ENCODE measurements at regions of chr17 and their contacts with region 1.

Region 1: GRCh38 chr17:39244600-39245570 is 19.1 kb upstream of the STAC2 start:
- H3K4me3 Mint-ChIP-seq: no peak overlapping the region
- H3K27ac Mint-ChIP-seq: no peak overlapping the region
- H3K4me1 Mint-ChIP-seq: peaks cover 13% of the 10 kb centered on the region
- H3K27me3 Mint-ChIP-seq: peaks cover 20% of the 10 kb centered on the region

Region 2: DNA sequence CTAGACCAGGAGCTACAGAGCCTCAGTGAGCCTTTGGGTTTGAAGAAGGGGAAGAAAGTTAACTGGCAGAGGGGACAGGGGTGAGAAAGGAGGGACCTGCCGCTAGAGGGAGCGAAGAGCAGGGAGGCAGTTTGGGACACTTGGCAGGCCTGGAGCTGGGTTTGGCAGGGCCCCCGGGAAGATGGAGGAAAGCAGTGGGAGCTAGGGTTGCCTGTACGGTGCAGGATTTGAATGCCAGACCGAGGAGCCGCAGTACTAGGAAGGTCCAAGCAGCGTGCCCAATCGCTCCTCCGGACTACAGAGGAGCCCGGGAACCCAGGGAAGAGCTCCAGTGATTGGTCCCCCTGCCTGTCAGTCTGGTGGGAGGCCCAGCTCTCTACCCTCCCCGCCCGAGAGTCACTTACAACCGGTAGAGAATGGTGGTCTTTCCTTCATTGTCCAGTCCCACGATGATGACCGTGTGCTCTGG is 80.2 kb before region 1 on chr17:
- intact Hi-C with region 1: loop called (anchors 5 kb)
- H3K4me3 Mint-ChIP-seq: peak overlapping the region; percentile 80
- H3K27ac Mint-ChIP-seq: peak overlapping the region; percentile 45
- H3K4me1 Mint-ChIP-seq: peaks cover 64% of the 10 kb centered on the region
- H3K27me3 Mint-ChIP-seq: peaks cover 24% of the 10 kb centered on the region

Region 3: DNA sequence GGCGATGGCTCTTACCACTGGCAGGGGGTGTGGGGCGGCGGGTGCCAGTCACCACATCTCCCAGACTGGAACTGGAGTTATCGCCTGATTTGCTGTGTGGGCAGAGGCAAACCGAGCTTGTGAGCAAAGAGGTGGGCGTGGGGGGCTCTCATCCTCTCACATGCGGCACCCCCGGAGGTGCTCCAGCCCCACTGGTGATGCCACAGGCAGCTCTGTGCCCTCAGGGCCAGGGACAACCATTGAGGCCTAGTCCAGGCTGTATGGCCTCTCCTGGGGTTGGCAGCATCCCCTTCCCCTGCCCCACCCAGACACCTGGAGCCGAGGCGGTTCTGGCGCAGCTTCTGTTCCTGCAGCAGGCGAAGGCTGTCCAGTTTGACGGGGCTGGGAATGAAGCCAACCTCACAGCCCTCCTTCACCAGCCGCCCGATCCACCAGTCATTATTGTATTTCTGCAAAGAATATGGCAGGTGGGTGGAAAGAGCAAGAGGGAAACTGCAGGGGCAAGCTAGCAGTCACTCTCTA is 58.3 kb before region 1 on chr17:
- intact Hi-C with region 1: no loop called
- H3K4me3 Mint-ChIP-seq: no peak overlapping the region
- H3K27ac Mint-ChIP-seq: no peak overlapping the region
- H3K4me1 Mint-ChIP-seq: peaks cover 9% of the 10 kb centered on the region
- H3K27me3 Mint-ChIP-seq: no peaks in the 10 kb centered on the region

Region 4: GRCh38 chr17:39209317-39210092 is 35.4 kb before region 1 on chr17:
- intact Hi-C with region 1: loop called (anchors 2 kb)
- H3K4me3 Mint-ChIP-seq: peak overlapping the region; percentile 39
- H3K27ac Mint-ChIP-seq: peak overlapping the region; percentile 79
- H3K4me1 Mint-ChIP-seq: peaks cover 45% of the 10 kb centered on the region
- H3K27me3 Mint-ChIP-seq: peaks cover 33% of the 10 kb centered on the region